Mammary epithelial cell (primary cell): ENCODE measurements at regions of chr10 and their contacts with region 1.

Region 1: DNA sequence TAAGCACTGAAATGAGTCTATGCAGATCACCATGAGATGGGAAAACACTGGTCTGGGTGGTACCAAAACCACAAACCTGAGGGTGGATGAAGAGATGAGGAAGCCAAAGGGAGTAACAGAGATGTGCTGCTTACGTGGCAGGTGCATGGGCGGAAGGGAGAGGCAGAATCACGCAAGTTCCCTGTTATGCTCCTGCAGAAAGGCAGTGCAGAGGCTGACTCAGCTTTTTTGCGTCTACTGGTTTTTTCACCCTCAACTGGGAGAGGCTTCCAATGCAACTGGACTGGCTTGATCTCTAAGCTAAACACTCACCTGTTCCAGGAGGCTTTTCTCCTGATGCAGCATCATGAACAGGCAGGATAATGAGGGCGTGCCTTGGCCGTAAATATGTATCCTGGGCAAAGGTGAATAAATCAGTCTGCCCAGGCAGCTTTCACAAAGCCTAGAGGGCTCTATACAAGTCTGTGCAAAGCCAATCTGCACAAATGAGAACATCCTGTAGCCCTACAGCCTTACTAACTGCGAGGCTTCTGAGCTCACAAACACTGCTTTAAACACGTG is 95.4 kb upstream of the AFAP1L2 start:
- DNase-seq: peak; percentile 97
- H3K4me3 ChIP-seq: no peak overlapping the region
- H3K27ac ChIP-seq: peak overlapping the region; percentile 84
- H3K4me1 ChIP-seq: peaks cover 27% of the 10 kb centered on the region
- H3K27me3 ChIP-seq: no peaks in the 10 kb centered on the region
- CTCF ChIP-seq: no peak

Region 2: DNA sequence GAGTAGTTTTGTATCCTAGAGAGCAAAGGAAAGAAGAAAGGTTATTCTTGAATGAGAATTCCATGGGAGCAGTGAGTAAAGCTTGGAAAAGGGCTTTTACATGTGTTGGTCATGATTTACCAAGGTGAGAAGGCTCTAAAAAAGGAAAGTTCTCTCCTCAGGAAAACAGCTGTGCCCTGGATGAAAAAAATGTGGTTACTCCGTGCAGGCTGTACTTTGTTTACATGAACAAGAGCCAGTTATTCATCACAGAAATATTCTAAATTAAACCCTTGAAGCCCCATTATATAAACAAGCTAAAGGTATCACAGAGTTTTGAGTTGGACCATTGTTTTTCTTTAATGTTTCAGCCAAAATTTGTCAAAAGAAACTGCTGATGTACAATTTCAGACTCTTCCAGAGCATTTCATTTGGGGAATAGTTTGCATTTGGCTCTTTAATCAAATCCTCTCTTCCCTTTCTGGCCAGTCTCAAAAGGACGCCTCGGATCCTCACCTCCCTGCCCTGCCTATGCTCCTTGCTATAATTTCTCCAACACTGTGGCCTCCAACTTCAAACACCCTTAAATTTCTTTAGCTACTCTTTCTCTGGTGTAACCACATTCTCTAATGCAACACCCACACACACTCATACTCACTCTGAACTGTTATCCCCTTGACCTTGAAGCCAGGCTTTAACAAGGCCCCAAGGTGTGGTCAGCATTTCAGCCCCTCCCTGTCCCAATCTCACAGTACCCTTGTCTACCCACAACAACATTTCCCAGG is 142.8 kb before region 1 on chr10:
- CTCF ChIA-PET with region 1: no interaction called
- dilution Hi-C with region 1: no loop called
- in situ Hi-C with region 1: no loop called
- intact Hi-C with region 1: no loop called
- DNase-seq: peak; percentile 72
- H3K4me3 ChIP-seq: no peak overlapping the region
- H3K27ac ChIP-seq: no peak overlapping the region
- H3K4me1 ChIP-seq: peaks cover 18% of the 10 kb centered on the region
- H3K27me3 ChIP-seq: no peaks in the 10 kb centered on the region
- CTCF ChIP-seq: no peak

Region 3: GRCh38 chr10:114520453-114520852 is 20.7 kb after region 1 on chr10:
- CTCF ChIA-PET with region 1: no interaction called
- dilution Hi-C with region 1: no loop called
- in situ Hi-C with region 1: no loop called
- intact Hi-C with region 1: loop called (anchors 1 kb)
- DNase-seq: peak; percentile 95
- H3K4me3 ChIP-seq: no peak overlapping the region
- H3K27ac ChIP-seq: peak overlapping the region; percentile 94
- H3K4me1 ChIP-seq: peaks cover 32% of the 10 kb centered on the region
- H3K27me3 ChIP-seq: no peaks in the 10 kb centered on the region
- CTCF ChIP-seq: no peak

Region 4: GRCh38 chr10:114526504-114527238 is 27.0 kb after region 1 on chr10:
- CTCF ChIA-PET with region 1: no interaction called
- dilution Hi-C with region 1: no loop called
- in situ Hi-C with region 1: no loop called
- intact Hi-C with region 1: loop called (anchors 1 kb)
- DNase-seq: peak; percentile 91
- H3K4me3 ChIP-seq: peak overlapping the region; percentile 61 to 88 (median 64)
- H3K27ac ChIP-seq: peak overlapping the region; percentile 96
- H3K4me1 ChIP-seq: peaks cover 15% of the 10 kb centered on the region
- H3K27me3 ChIP-seq: no peaks in the 10 kb centered on the region
- CTCF ChIP-seq: no peak

Region 5: GRCh38 chr10:114541081-114541796 is 41.5 kb after region 1 on chr10:
- CTCF ChIA-PET with region 1: no interaction called
- dilution Hi-C with region 1: no loop called
- in situ Hi-C with region 1: no loop called
- intact Hi-C with region 1: loop called (anchors 2 kb)
- DNase-seq: peak; percentile 89
- H3K4me3 ChIP-seq: no peak overlapping the region
- H3K27ac ChIP-seq: peak overlapping the region; percentile 47
- H3K4me1 ChIP-seq: peaks cover 41% of the 10 kb centered on the region
- H3K27me3 ChIP-seq: no peaks in the 10 kb centered on the region
- CTCF ChIP-seq: no peak

Region 6: GRCh38 chr10:116429288-116429977 is 1929.7 kb after region 1 on chr10:
- CTCF ChIA-PET with region 1: no interaction called
- dilution Hi-C with region 1: no loop called
- in situ Hi-C with region 1: no loop called
- intact Hi-C with region 1: loop called (anchors 10 kb)
- DNase-seq: peak; percentile 65
- H3K4me3 ChIP-seq: peak overlapping the region; percentile 54 to 100 (median 98)
- H3K27ac ChIP-seq: peak overlapping the region; percentile 97
- H3K4me1 ChIP-seq: peaks cover 43% of the 10 kb centered on the region
- H3K27me3 ChIP-seq: no peaks in the 10 kb centered on the region
- CTCF ChIP-seq: no peak